Dendritic cell treated with granulocyte-macrophage colony-stimulating factor and Interleukin-4, amounts not matched to agents 40 ng/mL and 50 ng/mL, for 4 days (primary cell): ENCODE measurements at regions of chr2 and their contacts with region 1.

Region 1: GRCh38 chr2:19863303-19864041 is 38.3 kb downstream of the TTC32 start:
- H3K4me3 Mint-ChIP-seq: no peak overlapping the region
- H3K27ac Mint-ChIP-seq: no peak overlapping the region
- H3K4me1 Mint-ChIP-seq: peaks cover 7% of the 10 kb centered on the region
- H3K27me3 Mint-ChIP-seq: peaks cover 17% of the 10 kb centered on the region

Region 2: DNA sequence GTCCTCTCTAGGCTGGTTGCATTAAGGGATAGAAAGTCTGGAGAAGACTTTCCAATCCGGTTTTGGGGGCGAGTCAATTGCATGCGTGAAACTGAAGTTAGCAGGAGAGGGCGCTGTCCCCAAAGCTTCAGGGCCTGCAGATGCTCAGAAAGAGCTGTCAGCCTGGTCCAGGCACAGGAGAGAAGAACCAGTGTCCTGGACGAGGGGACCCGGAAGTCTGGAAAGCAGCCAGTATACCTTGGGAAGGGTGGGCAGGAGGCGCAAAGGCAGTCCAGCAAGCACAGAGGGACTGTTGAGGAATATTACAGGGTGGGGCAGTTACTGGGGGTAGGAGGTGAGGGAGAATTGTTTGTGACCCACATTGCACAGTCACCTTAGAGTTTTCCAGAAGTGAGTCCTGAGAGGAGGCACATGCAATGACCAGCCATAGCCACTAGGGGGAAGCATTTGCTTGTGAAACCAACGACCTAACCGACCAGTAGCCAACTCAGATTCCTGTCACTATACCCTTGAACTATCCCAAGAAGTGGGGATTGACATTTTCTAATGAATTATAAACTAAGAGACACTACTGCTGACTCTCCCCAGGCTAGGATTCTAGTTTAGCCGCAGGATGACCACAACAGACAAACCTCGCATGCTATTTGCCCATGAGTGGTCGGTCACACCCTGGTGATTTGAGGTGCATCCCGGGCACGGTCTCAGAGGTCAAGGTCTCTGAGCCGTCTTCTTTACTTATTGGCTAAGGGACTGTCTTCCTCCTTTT is 1475.8 kb before region 1 on chr2:
- intact Hi-C with region 1: loop called (anchors 2 kb)
- H3K4me3 Mint-ChIP-seq: no peak overlapping the region
- H3K27ac Mint-ChIP-seq: no peak overlapping the region
- H3K4me1 Mint-ChIP-seq: no peaks in the 10 kb centered on the region
- H3K27me3 Mint-ChIP-seq: no peaks in the 10 kb centered on the region

Region 3: GRCh38 chr2:18435421-18436037 is 1427.9 kb before region 1 on chr2:
- intact Hi-C with region 1: loop called (anchors 5 kb)
- H3K4me3 Mint-ChIP-seq: no peak overlapping the region
- H3K27ac Mint-ChIP-seq: no peak overlapping the region
- H3K4me1 Mint-ChIP-seq: no peaks in the 10 kb centered on the region
- H3K27me3 Mint-ChIP-seq: no peaks in the 10 kb centered on the region

Region 4: DNA sequence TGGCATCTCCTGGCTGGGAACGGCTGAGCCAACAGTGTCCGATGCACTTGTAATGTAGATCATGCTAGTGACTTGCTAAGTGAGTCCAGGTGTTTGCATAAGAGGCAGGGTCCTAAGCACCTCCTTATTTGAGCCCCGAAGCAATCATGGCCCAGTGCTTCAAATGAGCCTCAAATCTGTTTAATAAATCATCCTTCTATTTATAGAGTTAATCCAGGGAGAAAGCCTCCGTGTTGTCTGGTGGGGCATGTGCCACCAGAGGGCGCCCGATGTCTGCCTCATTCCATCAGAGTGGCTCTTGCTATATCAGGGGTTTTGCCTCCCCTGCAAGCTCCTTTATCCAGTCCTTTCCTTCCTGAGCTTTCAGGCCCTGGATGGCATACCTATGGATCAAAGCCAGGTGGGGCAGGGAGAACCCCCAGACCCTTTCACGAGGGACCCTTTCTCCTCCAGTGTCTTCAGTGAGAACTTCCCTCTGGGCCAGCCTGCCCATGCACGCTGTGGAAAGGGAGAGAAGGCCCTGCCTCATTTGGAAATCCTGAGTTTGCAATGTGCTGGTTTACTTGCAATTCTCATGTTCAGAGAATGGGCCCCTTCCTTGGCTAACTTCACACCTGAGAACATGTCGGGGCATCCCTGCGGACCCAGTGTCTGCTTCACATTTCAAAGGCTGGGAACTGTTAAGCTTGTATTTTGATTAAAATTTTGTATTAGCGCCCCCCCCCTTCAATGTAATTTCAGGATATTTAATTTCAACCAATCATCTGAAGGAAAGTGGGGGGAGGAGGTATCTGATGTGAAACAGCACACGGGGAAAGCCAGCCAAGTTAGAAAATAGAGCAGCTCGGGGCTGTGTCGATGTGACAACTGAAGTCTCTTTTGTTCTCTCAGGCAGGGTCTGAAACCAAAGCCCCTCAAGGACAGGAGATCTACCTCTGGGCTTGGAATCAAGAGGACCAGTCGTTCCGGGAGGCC is 1342.7 kb before region 1 on chr2:
- intact Hi-C with region 1: loop called (anchors 1 kb)
- H3K4me3 Mint-ChIP-seq: no peak overlapping the region
- H3K27ac Mint-ChIP-seq: no peak overlapping the region
- H3K4me1 Mint-ChIP-seq: no peaks in the 10 kb centered on the region
- H3K27me3 Mint-ChIP-seq: peaks cover 7% of the 10 kb centered on the region

Region 5: GRCh38 chr2:19347619-19348562 is 515.6 kb before region 1 on chr2:
- intact Hi-C with region 1: loop called (anchors 5 kb)
- H3K4me3 Mint-ChIP-seq: peak overlapping the region; percentile 97
- H3K27ac Mint-ChIP-seq: peak overlapping the region; percentile 100
- H3K4me1 Mint-ChIP-seq: peaks cover 31% of the 10 kb centered on the region
- H3K27me3 Mint-ChIP-seq: peaks cover 45% of the 10 kb centered on the region

Region 6: DNA sequence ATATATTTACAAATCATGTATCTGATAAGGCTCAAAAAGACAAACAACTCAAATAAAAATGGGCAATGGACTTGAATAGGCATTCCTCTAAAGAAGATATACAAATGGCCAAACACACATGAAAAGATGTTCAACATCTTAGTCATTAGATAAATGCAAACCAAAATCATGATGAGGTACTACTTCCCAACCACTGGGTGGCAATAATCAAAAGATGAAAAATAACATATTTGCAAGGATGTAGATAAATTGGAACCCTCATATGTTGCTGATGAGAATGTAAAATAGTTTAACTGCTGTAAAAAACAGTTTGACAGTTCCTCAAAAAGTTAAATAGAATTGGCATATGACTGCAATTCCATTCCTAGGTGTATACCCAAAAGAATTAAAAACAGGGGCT is 94.0 kb before region 1 on chr2:
- intact Hi-C with region 1: loop called (anchors 5 kb)
- H3K4me3 Mint-ChIP-seq: no peak overlapping the region
- H3K27ac Mint-ChIP-seq: no peak overlapping the region
- H3K4me1 Mint-ChIP-seq: no peaks in the 10 kb centered on the region
- H3K27me3 Mint-ChIP-seq: peaks cover 5% of the 10 kb centered on the region

Region 7: DNA sequence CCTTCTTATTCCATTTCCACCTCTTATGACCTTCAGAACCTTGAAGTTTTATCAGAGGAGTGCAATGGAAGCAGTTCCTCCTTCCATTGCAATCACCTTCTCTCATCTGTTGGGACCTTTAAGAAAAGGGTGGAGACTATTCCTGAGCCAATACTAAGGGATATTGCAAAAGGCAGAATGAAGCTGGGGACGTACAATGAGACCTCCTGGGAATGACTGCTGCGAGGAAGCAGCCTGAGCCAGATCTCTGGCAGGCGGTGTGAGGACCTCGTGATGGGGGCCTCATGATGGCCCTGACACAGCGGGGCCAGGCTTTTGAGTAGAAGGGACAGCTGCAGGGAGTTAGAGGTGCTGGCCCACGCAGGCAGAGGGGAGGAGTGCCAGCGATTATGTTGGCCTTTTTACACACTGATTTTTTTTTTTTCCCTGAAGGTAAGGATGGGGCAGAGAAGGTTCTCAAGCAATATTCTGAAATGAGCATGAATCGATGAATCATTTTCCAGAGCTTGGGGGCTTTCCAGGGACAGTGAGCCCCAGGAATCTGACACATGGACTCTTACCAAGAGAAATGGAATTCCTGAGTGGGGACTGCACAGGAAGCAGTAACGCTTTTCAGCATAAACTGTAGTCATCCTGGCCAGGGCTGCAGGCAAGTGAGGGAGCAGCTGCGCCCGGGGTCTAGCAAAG is 228.0 kb after region 1 on chr2:
- intact Hi-C with region 1: no loop called
- H3K4me3 Mint-ChIP-seq: no peak overlapping the region
- H3K27ac Mint-ChIP-seq: no peak overlapping the region
- H3K4me1 Mint-ChIP-seq: peaks cover 9% of the 10 kb centered on the region
- H3K27me3 Mint-ChIP-seq: peaks cover 14% of the 10 kb centered on the region